Gastrocnemius medialis (tissue), 4 donors: ENCODE measurements at regions of chr4 and their contacts with region 1.

Region 1: DNA sequence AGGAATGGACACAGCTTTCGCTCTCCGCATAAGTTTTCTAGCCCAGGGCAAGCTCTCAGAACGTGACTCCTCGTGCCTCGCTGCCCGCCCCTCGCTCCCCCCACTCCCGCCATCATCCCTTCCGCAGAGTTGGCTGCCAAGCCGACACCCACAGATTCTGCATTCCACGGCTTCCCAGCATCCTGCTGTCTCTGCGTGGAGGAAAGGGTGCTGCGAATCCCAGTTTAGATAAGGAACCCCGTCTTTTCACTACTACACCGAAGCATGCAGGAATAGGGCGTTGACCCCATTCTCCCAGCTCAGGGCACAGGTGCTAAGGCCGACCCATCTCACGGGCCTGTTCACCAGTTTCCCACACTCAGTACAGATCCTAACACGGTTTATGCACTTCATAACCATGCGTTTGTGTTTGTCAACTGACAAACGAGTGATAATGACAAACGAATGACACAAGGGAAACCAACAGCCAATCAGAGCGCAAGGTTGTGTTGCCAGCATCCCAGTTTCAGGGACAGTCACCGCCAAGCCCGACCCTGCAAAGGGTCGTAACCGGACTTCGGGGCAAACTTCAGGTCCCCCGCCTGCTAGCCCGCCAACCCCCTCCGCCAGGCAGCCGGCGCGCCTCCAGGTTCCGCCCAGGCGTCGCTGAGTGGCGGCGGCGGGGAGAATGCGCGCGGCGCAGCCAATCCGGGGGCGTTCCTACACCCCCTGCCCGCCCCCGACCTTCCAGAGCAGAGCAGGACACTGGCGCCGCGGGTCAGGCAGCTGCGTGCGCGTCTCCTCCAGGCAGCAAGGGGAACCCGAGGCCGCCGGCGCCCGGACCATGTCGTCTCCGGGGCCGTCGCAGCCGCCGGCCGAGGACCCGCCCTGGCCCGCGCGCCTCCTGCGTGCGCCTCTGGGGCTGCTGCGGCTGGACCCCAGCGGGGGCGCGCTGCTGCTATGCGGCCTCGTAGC is at the start of gene CYP2U1:
- DNase-seq: peak; percentile 82 to 88
- ATAC-seq: peak; percentile 90 to 92
- H3K4me3 ChIP-seq: peak within 1 kb of the TSS; percentile 62 to 88 (median 78)
- H3K27ac ChIP-seq: peak within 1 kb of the TSS; percentile 78 to 90 (median 84)
- H3K4me1 ChIP-seq: peaks cover 26 to 27% of the 10 kb centered on the region in 2 donors
- H3K27me3 ChIP-seq: no peaks in the 10 kb centered on the region
- CTCF ChIP-seq: peak; percentile 31 to 56 (median 43)
- POLR2A ChIP-seq: peak; percentile 67 to 72
- total RNA-seq, gene CYP2U1: 3.5 to 7.5 (median 4.0) TPM

Region 2: DNA sequence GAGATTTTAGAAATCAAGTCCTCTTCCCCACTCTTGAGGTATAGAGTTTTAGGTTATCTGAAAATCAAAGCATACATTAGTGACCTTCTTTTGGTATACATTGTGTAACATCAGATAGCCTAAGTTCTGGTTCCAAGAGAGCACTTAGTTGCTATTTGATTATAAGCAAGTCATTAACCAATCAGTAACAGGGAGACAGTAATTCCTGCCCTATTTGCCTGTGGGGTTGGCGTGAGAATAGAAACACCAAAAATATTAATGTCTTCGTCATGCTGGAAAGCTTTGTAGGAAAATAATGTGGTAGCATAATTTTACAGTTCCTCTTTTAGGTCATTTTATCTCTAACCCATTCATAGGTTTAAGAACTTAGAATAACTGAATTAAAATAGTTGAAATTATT is 1998.0 kb before region 1 on chr4:
- in situ Hi-C with region 1: no loop called
- intact Hi-C with region 1: no loop called
- DNase-seq: no peak
- ATAC-seq: no peak
- H3K4me3 ChIP-seq: no peak overlapping the region
- H3K27ac ChIP-seq: no peak overlapping the region
- H3K4me1 ChIP-seq: no peaks in the 10 kb centered on the region
- H3K27me3 ChIP-seq: no peaks in the 10 kb centered on the region
- CTCF ChIP-seq: no peak
- POLR2A ChIP-seq: no peak

Region 3: DNA sequence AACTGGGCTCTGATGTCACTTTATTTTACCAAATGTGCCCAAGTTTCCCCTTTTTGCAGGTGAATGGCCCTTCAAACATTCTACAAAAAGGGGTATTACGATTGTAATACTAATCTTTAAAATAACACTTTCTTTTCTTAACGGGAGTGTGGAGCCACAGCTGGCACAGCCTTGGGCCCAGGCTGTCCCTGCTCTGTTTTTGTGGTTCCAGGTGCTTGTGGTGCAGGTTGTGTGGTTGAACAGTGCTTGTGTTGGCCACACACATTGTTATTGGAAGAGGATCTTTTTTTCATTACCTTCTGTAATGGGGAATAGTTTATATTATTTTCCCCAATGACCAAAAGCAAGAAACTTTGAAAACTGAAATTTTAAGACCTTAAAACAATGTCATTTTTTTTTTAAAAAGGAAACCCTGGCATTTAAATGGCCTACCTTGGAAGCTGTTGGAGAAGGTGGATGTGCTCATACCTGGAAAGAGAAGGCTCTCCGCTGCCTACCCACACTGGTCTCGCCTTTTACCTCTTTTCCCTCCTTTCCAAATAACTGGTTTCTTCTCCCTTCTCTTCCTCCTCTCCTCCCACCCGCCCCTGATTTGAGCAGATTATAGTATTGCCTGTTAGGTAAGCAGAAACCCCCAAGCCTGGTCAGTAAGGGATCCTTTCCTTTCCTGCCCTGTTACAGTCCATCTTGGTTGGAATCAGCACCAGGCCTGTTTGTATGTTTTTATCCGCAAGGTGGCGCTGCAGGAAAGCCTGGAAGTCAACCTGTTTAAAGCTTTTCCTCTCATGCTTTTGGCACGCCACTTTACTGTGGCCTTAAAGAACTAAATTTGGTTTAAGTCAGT is 87.2 kb after region 1 on chr4:
- in situ Hi-C with region 1: no loop called
- intact Hi-C with region 1: loop called (anchors 1 kb)
- DNase-seq: peak; percentile 61 to 81
- ATAC-seq: peak; percentile 85 to 91
- H3K4me3 ChIP-seq: no peak overlapping the region
- H3K27ac ChIP-seq: peak overlapping the region; percentile 32 to 70 (median 55)
- H3K4me1 ChIP-seq: peaks cover 10 to 21% of the 10 kb centered on the region in 2 donors
- H3K27me3 ChIP-seq: no peaks in the 10 kb centered on the region
- CTCF ChIP-seq: peak; percentile 70 to 92 (median 74)
- POLR2A ChIP-seq: no peak